ENCODE measurements at regions of chr15 and their contacts with region 1.

Region 1: DNA sequence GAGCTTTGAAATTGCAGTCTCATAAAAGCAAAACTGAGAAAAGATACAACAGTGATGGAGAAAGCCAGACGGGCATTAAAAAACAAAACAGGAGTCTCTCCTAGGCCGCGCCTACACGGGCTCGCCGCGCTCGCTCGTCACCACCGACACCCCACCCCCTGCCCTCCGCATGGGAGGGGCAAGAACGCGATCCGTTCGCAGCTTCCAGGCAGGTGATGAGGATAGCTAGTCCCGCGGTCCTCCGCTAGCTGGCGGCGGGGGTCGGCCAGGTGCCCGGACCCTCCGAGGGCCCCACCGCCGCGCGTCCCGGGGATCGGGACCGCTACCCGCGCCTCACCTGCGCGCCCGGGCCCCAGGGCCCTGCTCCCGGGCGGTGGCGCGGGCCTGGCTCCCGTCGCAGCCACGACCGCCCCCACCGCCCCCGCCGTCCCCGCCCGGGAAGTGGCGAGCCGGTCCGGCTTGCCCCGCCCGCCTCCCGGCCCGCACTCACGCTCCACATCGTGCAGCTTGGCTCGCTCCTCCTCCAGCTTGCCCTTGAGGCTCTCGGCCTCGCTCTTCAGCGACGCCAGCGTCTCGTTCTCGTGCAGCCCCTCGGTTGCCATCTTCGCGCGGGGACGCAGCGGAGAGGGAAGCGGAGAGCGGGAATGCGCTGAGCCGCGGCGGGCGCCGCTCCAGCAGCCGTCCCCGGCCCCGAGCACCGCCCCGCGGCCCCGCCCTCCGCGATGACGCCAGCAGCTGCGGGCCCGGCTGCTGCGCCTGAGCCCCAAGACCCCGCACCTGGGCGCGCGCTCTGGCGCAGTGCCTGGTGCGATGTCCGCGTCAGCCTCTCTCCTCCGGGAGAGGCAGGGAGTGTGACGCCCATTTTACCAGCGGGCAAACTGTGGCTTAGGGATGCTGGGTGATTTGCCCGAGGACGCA is 11.7 kb downstream of the GNB5 start:
- DNase-seq: peak; percentile 80 to 85
- H3K4me3 ChIP-seq: peak overlapping the region; percentile 88
- H3K4me3 Mint-ChIP-seq: peak overlapping the region; percentile 97
- H3K27ac Mint-ChIP-seq: peak overlapping the region; percentile 88
- H3K4me1 ChIP-seq: peaks cover 11% of the 10 kb centered on the region
- H3K4me1 Mint-ChIP-seq: peaks cover 3% of the 10 kb centered on the region
- H3K27me3 ChIP-seq: no peaks in the 10 kb centered on the region
- H3K27me3 Mint-ChIP-seq: no peaks in the 10 kb centered on the region
- CTCF ChIP-seq: no peak

Region 2: DNA sequence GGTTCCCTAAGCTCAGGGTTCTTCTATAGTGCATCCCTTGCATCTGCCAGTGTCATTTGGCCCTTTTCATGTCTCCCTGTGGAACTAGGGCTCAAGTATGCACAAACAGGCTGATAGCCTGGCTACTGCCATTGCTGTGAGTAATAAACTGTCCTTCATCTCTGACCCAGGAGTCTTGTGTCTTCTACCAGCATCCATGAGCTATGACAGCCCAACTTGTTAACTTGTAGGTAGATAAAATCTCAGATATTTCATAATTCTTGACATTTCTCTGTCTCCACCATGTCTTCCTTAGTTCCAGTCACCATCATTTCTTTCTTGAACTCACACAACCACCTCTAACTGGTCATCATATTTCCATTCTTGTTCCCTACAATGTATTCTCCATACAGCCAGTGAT is 47.5 kb before region 1 on chr15:
- CTCF ChIA-PET with region 1: no interaction called
- POLR2A ChIA-PET with region 1: no interaction called
- intact Hi-C with region 1: no loop called
- DNase-seq: no peak
- H3K4me3 ChIP-seq: no peak overlapping the region
- H3K4me3 Mint-ChIP-seq: no peak overlapping the region
- H3K27ac Mint-ChIP-seq: no peak overlapping the region
- H3K4me1 ChIP-seq: peaks cover 1% of the 10 kb centered on the region
- H3K4me1 Mint-ChIP-seq: peaks cover 3% of the 10 kb centered on the region
- H3K27me3 ChIP-seq: no peaks in the 10 kb centered on the region
- H3K27me3 Mint-ChIP-seq: no peaks in the 10 kb centered on the region
- CTCF ChIP-seq: no peak

Region 3: DNA sequence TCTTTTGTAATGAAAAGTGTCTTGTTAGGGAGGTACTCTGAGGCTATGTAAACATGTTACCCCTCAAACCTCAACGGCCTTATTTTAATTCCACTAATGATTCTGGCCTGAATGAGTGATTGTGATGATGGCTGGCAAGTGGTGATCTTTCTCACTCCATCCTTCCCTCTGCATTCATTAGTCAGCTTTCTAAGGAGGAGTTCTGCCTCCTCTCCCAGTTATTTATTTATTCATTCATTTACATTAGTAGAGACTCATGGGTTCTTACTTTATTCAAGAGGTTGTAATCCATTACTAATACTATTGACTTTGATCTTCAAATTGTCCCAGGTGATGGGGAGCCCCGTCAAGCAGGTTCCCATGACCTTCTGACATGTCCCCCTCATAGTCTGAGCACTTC is 23.7 kb before region 1 on chr15:
- CTCF ChIA-PET with region 1: interaction called, 12 read pairs
- POLR2A ChIA-PET with region 1: no interaction called
- intact Hi-C with region 1: no loop called
- DNase-seq: no peak
- H3K4me3 ChIP-seq: no peak overlapping the region
- H3K4me3 Mint-ChIP-seq: no peak overlapping the region
- H3K27ac Mint-ChIP-seq: no peak overlapping the region
- H3K4me1 ChIP-seq: peaks cover 18% of the 10 kb centered on the region; the same call in 1 of the 2 replicates
- H3K4me1 Mint-ChIP-seq: peaks cover 6% of the 10 kb centered on the region
- H3K27me3 ChIP-seq: no peaks in the 10 kb centered on the region
- H3K27me3 Mint-ChIP-seq: no peaks in the 10 kb centered on the region
- CTCF ChIP-seq: no peak

Region 4: GRCh38 chr15:52208306-52208946 is 28.9 kb after region 1 on chr15:
- CTCF ChIA-PET with region 1: interaction called, 45 read pairs
- POLR2A ChIA-PET with region 1: no interaction called
- intact Hi-C with region 1: loop called (anchors 1 kb)
- DNase-seq: peak; percentile 76 to 83
- H3K4me3 ChIP-seq: no peak overlapping the region
- H3K4me3 Mint-ChIP-seq: no peak overlapping the region
- H3K27ac Mint-ChIP-seq: no peak overlapping the region
- H3K4me1 ChIP-seq: no peaks in the 10 kb centered on the region
- H3K4me1 Mint-ChIP-seq: no peaks in the 10 kb centered on the region
- H3K27me3 ChIP-seq: no peaks in the 10 kb centered on the region
- H3K27me3 Mint-ChIP-seq: no peaks in the 10 kb centered on the region
- CTCF ChIP-seq: peak; percentile 75 to 82

Measured in Caco-2 (cell line).